ENCODE measurements at regions of chr1 and their contacts with region 1.

Region 1: DNA sequence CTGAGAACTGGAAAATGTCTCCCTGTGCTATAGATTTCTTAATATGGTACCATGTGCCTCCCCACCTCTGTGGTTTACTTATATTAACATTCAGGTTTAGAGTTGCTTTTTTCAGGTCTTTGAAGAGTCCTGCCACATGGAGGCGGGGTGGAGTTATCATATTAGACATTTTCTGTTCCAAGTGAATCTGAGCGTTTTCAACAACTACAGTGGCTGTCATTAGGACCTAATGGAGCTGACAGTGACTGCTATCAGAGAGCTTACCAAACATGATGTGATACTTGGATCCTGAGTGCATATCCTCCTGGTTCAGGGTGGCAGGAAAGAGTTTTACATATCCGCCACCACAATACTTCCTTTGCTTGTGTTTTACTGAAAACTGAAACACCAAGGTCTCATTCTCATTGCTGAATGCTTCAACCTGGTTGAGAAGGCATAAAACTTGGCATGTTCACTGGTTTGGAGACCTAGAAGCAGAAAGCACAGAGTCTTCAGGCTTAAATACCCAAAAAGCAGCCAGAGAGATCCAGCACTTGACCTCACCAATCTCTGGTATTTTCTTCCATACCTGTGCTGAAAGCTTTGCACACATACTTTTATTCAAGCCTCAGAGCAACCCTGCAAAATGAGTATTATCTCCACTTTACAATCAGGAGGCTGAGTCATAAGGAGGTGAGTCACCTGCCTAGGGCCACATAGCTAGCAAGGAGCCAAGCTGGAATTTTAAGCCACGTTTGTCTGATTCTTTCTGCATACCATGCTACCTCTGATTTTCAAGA is 47.4 kb upstream of the OSBPL9 start:
- DNase-seq: peak; percentile 29
- H3K4me3 Mint-ChIP-seq: peak overlapping the region; percentile 38
- H3K27ac Mint-ChIP-seq: peak overlapping the region; percentile 90
- H3K4me1 Mint-ChIP-seq: no peaks in the 10 kb centered on the region
- H3K27me3 Mint-ChIP-seq: no peaks in the 10 kb centered on the region

Region 2: DNA sequence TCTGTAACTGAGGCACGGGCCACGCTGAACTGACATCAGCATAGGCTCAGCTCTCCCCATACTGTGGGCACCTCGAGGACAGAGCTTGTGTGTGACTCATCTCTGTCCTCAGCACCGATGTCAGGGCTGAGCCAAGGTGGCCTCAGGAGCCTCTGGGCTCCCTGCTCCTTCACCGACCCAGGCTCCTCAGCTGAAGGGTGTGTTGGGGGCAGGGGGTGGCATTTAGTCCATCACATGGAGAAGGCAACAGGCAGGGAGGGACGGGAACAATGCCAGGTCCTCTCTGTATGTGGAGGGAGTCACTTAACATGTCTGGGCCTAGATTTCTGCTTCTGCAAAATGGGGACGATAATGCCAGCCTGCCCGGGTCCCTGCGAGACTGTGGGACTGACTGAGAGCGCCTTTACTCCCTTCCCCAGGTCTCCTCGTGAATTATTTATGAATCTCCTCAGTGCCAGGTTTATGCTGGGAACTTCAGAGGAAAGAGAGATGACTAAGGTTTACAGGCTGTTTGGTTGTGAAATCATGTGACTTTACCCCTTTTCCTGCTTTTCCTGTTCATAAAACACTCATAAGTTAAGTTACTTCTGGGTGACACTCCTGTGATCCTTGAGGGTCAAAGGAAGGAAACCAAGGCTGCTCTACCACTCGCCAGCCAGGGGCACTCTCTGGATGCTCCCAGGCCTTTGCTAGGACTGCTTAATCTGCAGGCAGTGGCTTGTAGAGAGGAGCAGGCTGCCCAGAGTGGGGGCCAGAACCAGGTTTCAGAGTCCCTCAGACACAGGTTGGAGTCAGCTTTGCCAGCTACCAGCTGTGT is 255.3 kb before region 1 on chr1:
- intact Hi-C with region 1: no loop called
- DNase-seq: no peak
- H3K4me3 Mint-ChIP-seq: no peak overlapping the region
- H3K27ac Mint-ChIP-seq: no peak overlapping the region
- H3K4me1 Mint-ChIP-seq: peaks cover 13% of the 10 kb centered on the region
- H3K27me3 Mint-ChIP-seq: peaks cover 2% of the 10 kb centered on the region

Region 3: DNA sequence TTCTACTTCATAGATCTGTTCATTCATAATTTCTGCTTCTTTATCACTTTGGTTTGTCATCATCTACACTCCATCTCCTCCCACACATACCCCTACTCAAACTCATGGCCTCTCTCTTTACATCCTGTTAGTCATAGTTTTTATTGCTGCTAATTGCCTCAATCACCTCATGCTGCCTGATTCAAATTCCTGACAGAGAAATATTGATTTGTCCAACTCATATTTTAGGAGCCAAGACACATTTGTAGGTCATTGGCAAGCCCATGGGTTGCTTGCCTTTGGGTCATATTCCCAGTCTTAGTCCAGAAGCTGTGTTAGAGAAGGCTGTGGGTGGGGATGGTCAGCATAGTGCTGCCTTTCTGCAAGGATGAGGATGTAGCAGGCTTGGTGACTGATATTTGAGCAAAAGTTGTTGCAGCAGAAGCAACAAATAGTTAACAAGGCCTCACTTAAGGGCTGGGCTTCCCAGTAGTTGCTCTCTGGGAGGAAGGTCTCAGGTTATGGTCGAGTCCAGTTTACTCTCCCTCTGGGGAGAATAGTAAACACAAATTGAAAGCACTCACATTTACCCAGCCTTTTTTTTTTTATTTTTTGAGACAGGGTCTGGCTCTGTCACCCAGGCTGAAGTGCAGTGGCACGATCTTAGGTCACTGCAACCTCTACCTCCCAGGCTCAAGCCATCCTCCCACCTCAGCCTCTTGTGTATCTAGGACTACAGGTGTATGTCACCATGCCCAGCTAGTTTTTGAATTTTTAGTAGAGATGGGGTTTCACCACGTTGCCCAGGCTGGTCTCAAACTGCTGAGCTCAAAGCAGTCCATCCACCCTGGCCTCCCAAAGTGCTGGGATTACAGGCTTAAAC is 27.9 kb before region 1 on chr1:
- intact Hi-C with region 1: loop called (anchors 1 kb)
- DNase-seq: no peak
- H3K4me3 Mint-ChIP-seq: no peak overlapping the region
- H3K27ac Mint-ChIP-seq: peak overlapping the region; percentile 65
- H3K4me1 Mint-ChIP-seq: peaks cover 29% of the 10 kb centered on the region
- H3K27me3 Mint-ChIP-seq: peaks cover 2% of the 10 kb centered on the region

Region 4: GRCh38 chr1:51551848-51552296 is 17.6 kb before region 1 on chr1:
- intact Hi-C with region 1: loop called (anchors 1 kb)
- DNase-seq: no peak
- H3K4me3 Mint-ChIP-seq: no peak overlapping the region
- H3K27ac Mint-ChIP-seq: no peak overlapping the region
- H3K4me1 Mint-ChIP-seq: peaks cover 21% of the 10 kb centered on the region
- H3K27me3 Mint-ChIP-seq: no peaks in the 10 kb centered on the region

Region 5: GRCh38 chr1:51616901-51617708 is 47.6 kb after region 1 on chr1 and contains the start of gene OSBPL9:
- intact Hi-C with region 1: loop called (anchors 2 kb)
- DNase-seq: peak; percentile 79
- H3K4me3 Mint-ChIP-seq: peak within 1 kb of the TSS; percentile 100
- H3K27ac Mint-ChIP-seq: peak within 1 kb of the TSS; percentile 98
- H3K4me1 Mint-ChIP-seq: peaks cover 22% of the 10 kb centered on the region
- H3K27me3 Mint-ChIP-seq: peaks cover 5% of the 10 kb centered on the region
- total RNA-seq, gene OSBPL9: 48.1 and 48.8 TPM in 2 replicates

Region 6: DNA sequence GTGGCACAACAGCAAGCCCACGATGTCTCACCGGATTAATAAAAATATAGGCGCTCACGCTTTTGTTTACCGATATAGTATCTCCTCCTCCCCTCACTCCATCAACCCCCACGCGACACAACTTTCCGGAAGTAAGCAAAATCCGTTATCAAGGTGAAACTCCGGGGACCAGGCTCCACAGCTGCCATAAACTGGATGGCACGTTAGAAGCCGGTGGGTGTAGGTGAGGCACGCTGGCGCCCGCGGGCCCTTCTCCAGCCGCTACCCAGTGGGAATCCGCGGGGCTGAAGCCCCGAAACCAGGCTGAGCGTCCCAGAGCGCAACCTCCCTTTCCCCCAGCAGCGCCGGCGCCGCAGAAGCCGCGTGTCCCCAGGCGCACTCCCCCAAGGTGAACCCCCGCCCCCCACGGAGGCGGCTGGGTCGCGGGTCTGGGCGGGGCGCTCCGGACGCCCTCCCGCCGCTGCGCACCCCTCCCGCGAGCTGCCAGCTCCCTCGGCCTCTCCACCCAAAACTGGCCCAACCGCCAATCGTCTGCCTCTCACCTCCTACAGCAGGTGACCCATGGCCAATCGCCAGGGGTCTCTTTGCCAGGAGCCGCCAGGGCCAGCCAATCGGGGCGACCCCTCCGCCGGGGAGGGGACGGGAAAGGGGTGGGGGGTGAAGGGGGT is 159.8 kb after region 1 on chr1:
- intact Hi-C with region 1: loop called (anchors 5 kb)
- DNase-seq: peak; percentile 94
- H3K4me3 Mint-ChIP-seq: peak overlapping the region; percentile 84
- H3K27ac Mint-ChIP-seq: peak overlapping the region; percentile 88
- H3K4me1 Mint-ChIP-seq: peaks cover 24% of the 10 kb centered on the region
- H3K27me3 Mint-ChIP-seq: no peaks in the 10 kb centered on the region

Measured in activated T-helper 1 cell treated with anti-CD3 and anti-CD28 coated beads, Interleukin-12 subunit alpha, Interleukin-12 subunit beta, Interleukin-2, Interleukin-4 antibody, amounts not matched to agents 30 ng/mL and 10 ng/mL and 1 ng/mL, durations not matched to agents 14 hours and 24 hours and 36 hours (primary cell).